Heart right ventricle (tissue), 16 donors: ENCODE measurements at regions of chr2 and their contacts with region 1.

Region 1: GRCh38 chr2:102258386-102259074 is 52.8 kb upstream of the IL1RL1 start:
- DNase-seq: no peak
- ATAC-seq: peak in 1 of 8 donors; percentile 77
- H3K4me3 ChIP-seq: no peak overlapping the region
- H3K27ac ChIP-seq: peak overlapping the region in 1 of 10 donors; percentile 45
- H3K4me1 ChIP-seq: peaks cover 0 to 37% (median 0%) of the 10 kb centered on the region in 9 donors
- H3K27me3 ChIP-seq: peaks cover 0 to 13% (median under 1%) of the 10 kb centered on the region in 7 donors
- CTCF ChIP-seq: no peak

Region 2: DNA sequence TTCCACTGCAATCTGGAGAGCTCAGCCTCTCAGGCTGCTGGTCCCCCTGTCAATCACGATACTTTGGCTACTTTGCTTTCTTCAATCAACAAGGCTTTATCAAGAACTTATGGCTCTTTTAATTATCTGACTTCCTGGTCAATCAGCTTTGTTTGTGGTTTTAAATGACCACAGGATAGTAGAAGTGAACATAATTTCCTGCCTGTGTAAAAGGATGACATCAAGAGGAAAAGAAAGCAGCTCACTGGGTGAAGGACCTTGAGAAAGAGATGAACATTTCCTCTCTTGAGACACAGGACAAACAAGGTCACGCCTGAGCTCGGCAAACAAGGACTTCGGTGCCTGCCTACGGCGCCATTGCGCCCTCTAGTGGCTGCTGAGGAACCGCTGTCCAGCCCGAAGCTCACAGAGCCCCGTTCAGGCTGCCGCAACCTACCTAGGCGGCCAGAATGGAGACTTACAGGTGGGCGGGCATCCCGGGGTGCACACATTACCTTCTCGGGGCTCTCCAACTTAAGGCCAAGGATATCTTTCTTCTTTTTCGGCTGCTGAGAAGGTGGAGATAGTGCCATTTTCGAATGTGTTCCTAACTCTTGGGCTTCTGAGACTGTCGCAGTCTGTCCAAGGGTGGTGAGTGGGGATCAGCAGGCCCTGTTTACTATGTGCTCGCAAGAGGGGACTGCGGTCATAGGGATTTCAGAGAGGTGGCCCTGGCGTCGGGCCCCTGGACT is 17.7 kb before region 1 on chr2:
- intact Hi-C with region 1: no loop called
- DNase-seq: peak; percentile 93
- ATAC-seq: peak; percentile 93 to 97 (median 94)
- H3K4me3 ChIP-seq: peak overlapping the region in 5 of 10 donors; percentile 15 to 35 (median 19)
- H3K27ac ChIP-seq: peak overlapping the region; percentile 59 to 91 (median 78)
- H3K4me1 ChIP-seq: peaks cover 0 to 41% (median 20%) of the 10 kb centered on the region in 9 donors
- H3K27me3 ChIP-seq: peaks cover 0 to 17% (median 0%) of the 10 kb centered on the region in 7 donors
- CTCF ChIP-seq: peak; percentile 96 to 100 (median 99)

Region 3: GRCh38 chr2:102336502-102336945 is 78.0 kb after region 1 on chr2:
- intact Hi-C with region 1: loop called in 3 of 10 experiments (anchors 5 kb)
- DNase-seq: peak; percentile 21 to 27
- ATAC-seq: peak; percentile 50 to 85 (median 70)
- H3K4me3 ChIP-seq: peak overlapping the region in 4 of 10 donors; percentile 6 to 18 (median 14)
- H3K27ac ChIP-seq: peak overlapping the region in 8 of 10 donors; percentile 45 to 68 (median 50)
- H3K4me1 ChIP-seq: peaks cover 0 to 32% (median 17%) of the 10 kb centered on the region in 9 donors
- H3K27me3 ChIP-seq: peaks cover 0 to 4% (median 0%) of the 10 kb centered on the region in 7 donors
- CTCF ChIP-seq: no peak